Naive thymus-derived CD4-positive, alpha-beta T cell (primary cell): ENCODE measurements at regions of chr9 and their contacts with region 1.

Region 1: DNA sequence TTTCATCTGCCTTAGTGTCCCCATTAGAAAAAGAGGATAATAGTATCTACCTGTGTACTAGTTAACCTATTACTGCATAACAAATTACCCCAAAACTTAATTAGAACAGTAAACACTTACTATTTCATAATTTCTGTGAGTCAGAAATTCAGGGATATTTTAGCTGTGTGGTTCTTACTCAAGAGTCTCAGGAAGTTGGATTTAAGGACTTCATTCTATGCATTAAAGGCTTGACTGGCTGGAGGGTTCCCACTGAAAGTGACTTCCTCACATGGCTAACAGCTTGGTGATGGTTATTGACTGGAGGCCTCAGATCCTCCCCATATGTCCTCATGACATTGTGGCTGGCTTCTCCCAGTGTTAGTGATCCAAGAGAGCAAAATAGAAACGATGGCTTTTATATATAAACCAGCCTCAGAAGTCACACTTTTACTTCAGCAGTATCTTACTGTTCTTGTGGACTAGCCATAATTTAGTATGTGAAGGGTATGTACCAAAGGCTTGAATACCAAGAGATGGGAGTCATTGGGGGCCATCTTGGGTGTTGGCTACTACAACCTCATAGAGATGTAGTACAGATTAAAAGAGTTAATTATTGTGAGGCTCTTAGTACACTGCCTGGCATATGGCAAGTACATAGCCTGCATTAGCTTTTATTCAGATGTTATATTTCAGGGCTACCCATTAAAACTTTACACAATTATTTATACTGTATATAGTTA is 9.9 kb downstream of the RAD23B start:
- DNase-seq: no peak
- ATAC-seq: no peak
- H3K4me3 ChIP-seq: no peak overlapping the region
- H3K4me3 Mint-ChIP-seq: peak overlapping the region in 5 of 10 donors; percentile 4 to 45 (median 30)
- H3K27ac ChIP-seq: no peak overlapping the region
- H3K27ac Mint-ChIP-seq: peak overlapping the region in 3 of 9 donors; percentile 30 to 41 (median 40)
- H3K4me1 ChIP-seq: peaks cover 27 to 34% of the 10 kb centered on the region in 2 donors
- H3K4me1 Mint-ChIP-seq: peaks cover 61 to 97% (median 81%) of the 10 kb centered on the region in 7 donors
- H3K27me3 ChIP-seq: no peaks in the 10 kb centered on the region
- H3K27me3 Mint-ChIP-seq: no peaks in the 10 kb centered on the region

Region 2: GRCh38 chr9:106625259-106625789 is 667.7 kb before region 1 on chr9:
- CTCF ChIA-PET with region 1: no interaction called
- POLR2A ChIA-PET with region 1: no interaction called
- intact Hi-C with region 1: no loop called
- DNase-seq: no peak
- ATAC-seq: no peak
- H3K4me3 ChIP-seq: no peak overlapping the region
- H3K4me3 Mint-ChIP-seq: no peak overlapping the region
- H3K27ac ChIP-seq: no peak overlapping the region
- H3K27ac Mint-ChIP-seq: no peak overlapping the region
- H3K4me1 ChIP-seq: no peaks in the 10 kb centered on the region
- H3K4me1 Mint-ChIP-seq: no peaks in the 10 kb centered on the region
- H3K27me3 ChIP-seq: no peaks in the 10 kb centered on the region
- H3K27me3 Mint-ChIP-seq: peaks cover 0 to 8% (median 0%) of the 10 kb centered on the region in 5 donors

Region 3: DNA sequence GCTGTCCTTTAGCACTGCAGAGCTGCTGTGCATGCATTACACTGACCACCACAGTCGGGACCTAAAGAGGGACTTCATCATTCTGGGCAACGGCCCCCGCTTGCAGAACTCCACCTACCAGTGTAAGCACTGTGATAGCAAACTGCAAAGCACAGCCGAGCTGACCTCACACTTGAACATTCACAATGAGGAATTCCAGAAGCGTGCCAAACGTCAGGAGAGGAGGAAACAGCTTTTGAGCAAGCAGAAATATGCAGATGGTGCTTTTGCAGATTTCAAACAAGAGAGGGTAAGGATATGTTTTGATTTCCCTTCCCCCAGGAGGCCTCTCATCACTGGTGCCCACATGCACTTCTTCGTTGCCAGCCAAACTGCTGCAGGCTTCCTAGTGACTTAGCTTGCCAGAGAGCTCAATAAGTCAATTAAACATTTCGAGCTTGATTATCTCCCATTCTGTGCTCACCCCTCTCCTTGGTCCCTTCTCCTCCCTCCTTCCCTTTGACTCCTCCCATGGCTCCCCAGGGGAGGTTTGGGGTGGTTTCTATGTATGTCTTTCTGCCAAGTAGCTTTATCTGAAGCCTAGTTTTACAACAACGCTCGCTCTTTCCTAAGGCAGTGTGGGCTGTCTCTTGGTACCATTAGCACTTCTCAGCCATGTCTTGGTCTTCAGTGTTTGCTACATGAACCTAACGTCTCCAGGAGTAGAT is 363.4 kb before region 1 on chr9:
- CTCF ChIA-PET with region 1: no interaction called
- POLR2A ChIA-PET with region 1: no interaction called
- intact Hi-C with region 1: no loop called
- DNase-seq: no peak
- ATAC-seq: no peak
- H3K4me3 ChIP-seq: no peak overlapping the region
- H3K4me3 Mint-ChIP-seq: no peak overlapping the region
- H3K27ac ChIP-seq: no peak overlapping the region
- H3K27ac Mint-ChIP-seq: no peak overlapping the region
- H3K4me1 ChIP-seq: no peaks in the 10 kb centered on the region
- H3K4me1 Mint-ChIP-seq: no peaks in the 10 kb centered on the region
- H3K27me3 ChIP-seq: no peaks in the 10 kb centered on the region
- H3K27me3 Mint-ChIP-seq: no peaks in the 10 kb centered on the region

Region 4: DNA sequence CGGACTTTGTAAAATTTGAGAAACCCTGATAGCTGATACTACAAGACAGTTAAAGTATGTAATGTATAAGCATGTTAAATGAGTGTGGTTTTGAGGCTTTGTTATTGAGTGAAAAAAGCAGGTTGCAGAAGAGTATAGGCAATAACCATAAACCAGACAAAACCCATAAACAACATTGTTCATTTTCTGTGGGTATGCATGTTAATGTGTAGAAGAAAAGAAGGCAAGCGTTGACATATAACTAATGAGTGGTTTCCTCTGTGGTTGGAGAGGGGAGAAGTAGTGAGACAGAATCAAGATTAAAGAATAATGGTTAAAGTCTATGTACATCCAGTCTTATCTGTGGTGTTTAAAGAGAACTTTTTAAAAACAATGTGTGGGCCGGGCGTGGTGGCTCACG is 16.3 kb after region 1 on chr9:
- CTCF ChIA-PET with region 1: no interaction called
- POLR2A ChIA-PET with region 1: no interaction called
- intact Hi-C with region 1: loop called in 1 of 2 experiments (anchors 2 kb)
- DNase-seq: peak in 4 of 9 donors; percentile 3 to 29 (median 16)
- ATAC-seq: peak; percentile 77
- H3K4me3 ChIP-seq: no peak overlapping the region
- H3K4me3 Mint-ChIP-seq: peak overlapping the region in 8 of 10 donors; percentile 5 to 61 (median 33)
- H3K27ac ChIP-seq: no peak overlapping the region
- H3K27ac Mint-ChIP-seq: peak overlapping the region; percentile 9 to 83 (median 50)
- H3K4me1 ChIP-seq: peaks cover 12 to 15% of the 10 kb centered on the region in 2 donors
- H3K4me1 Mint-ChIP-seq: peaks cover 35 to 82% (median 66%) of the 10 kb centered on the region in 7 donors
- H3K27me3 ChIP-seq: no peaks in the 10 kb centered on the region
- H3K27me3 Mint-ChIP-seq: no peaks in the 10 kb centered on the region

Region 5: GRCh38 chr9:107397723-107398044 is 104.7 kb after region 1 on chr9:
- CTCF ChIA-PET with region 1: no interaction called
- POLR2A ChIA-PET with region 1: no interaction called
- intact Hi-C with region 1: no loop called
- DNase-seq: no peak
- ATAC-seq: no peak
- H3K4me3 ChIP-seq: no peak overlapping the region
- H3K4me3 Mint-ChIP-seq: no peak overlapping the region
- H3K27ac ChIP-seq: no peak overlapping the region
- H3K27ac Mint-ChIP-seq: peak overlapping the region in 1 of 9 donors; percentile 3
- H3K4me1 ChIP-seq: no peaks in the 10 kb centered on the region
- H3K4me1 Mint-ChIP-seq: no peaks in the 10 kb centered on the region
- H3K27me3 ChIP-seq: no peaks in the 10 kb centered on the region
- H3K27me3 Mint-ChIP-seq: peaks cover 0 to 20% (median 5%) of the 10 kb centered on the region in 5 donors